Left colon (tissue), 2 donors: ENCODE measurements at regions of chr2 and their contacts with region 1.

Region 1: GRCh38 chr2:137847443-137847842 is 116.8 kb upstream of the HNMT start:
- DNase-seq: no peak
- ATAC-seq: no peak

Region 2: DNA sequence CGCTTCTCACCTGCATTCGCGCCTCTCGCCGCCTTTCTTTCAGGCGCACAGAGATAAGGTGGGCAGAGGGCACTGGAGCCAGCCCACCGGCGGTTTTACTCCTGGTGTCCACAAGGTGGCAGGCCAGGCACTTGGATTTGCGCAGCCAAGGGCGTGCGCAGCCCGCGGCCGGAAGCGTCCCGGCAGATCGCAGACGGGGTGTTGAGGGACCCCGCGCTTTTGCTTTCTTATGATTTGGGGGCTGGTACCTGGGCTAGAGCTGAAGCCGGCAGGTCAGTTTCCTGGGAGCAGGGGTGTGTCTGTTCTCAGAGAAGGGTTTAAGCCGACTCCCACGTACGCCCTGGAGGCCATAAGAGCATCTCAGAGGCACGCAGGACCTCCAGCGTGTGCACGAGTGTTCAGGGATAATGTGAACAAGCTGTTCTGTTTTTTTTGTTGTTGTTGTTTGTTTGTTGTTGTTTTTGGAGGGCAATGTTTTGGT is 1423.9 kb before region 1 on chr2:
- intact Hi-C with region 1: loop called in 1 of 2 experiments (anchors 10 kb)
- DNase-seq: peak; percentile 42 to 73
- ATAC-seq: peak; percentile 91

Region 3: DNA sequence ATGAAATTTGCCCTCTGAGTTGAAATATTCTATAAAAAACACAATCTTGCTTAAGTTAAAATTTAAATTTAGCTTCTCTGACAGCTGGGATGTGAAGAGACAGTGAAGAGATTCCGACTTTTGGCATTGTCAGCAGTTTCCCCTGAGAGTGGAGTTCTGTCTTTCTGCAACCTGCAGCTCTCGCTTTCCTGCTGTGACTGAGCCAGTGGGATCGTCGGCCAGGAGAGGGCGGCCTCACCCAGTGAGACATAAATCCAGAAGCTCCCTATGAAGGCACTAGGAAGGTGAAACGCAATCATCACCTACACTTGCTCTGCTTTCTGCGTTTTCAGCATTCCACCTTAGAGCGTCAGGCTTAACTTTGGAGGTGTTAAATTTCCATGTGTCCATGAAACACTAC is 41.4 kb after region 1 on chr2:
- intact Hi-C with region 1: no loop called
- DNase-seq: peak; percentile 28 to 67
- ATAC-seq: no peak